Activated naive CD4-positive, alpha-beta T cell treated with anti-CD3 and anti-CD28 coated beads for 36 hours (primary cell): ENCODE measurements at regions of chr10 and their contacts with region 1.

Region 1: DNA sequence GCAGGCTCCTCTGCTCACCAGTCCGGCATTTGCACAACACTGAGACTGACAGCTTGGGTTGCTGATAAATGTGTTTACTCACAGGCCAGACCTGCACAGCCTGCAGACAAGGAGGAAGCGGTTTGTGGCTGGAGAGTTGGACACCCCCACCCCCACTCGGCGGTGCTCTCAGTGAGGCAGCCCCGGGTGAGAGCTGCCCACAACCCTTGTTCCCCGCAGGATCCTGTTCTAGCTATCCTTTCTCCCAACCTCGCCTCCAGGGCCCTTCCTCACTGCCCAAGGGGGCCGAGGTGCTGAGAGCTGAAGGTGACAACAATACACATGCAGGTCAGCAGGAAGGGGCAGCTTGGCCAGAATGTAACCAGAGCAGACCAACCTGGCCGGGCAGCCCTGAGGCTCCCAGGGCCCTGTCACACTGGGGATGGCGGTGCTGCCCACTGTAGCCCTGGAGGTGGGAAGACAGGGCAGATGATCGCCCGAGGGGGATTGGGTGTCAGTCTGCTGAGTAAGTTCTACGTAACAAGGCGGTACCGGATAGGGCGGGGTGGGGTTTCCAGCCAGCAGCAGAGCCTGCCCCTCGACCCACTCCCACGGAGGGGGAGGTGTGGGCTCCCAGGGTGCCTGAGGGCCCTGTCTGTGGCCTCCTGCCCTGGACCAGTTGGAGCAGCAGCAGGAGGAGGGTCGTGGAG is 2.1 kb upstream of the ADAM8 start:
- DNase-seq: no peak
- H3K4me3 Mint-ChIP-seq: no peak overlapping the region
- H3K27ac Mint-ChIP-seq: peak overlapping the region; percentile 19
- H3K4me1 Mint-ChIP-seq: peaks cover 23% of the 10 kb centered on the region
- H3K27me3 Mint-ChIP-seq: no peaks in the 10 kb centered on the region

Region 2: GRCh38 chr10:132929953-132930548 is 348.7 kb before region 1 on chr10:
- CTCF ChIA-PET with region 1: no interaction called
- intact Hi-C with region 1: loop called (anchors 5 kb)
- DNase-seq: peak; percentile 56
- H3K4me3 Mint-ChIP-seq: no peak overlapping the region
- H3K27ac Mint-ChIP-seq: peak overlapping the region; percentile 71
- H3K4me1 Mint-ChIP-seq: peaks cover 25% of the 10 kb centered on the region
- H3K27me3 Mint-ChIP-seq: no peaks in the 10 kb centered on the region

Region 3: DNA sequence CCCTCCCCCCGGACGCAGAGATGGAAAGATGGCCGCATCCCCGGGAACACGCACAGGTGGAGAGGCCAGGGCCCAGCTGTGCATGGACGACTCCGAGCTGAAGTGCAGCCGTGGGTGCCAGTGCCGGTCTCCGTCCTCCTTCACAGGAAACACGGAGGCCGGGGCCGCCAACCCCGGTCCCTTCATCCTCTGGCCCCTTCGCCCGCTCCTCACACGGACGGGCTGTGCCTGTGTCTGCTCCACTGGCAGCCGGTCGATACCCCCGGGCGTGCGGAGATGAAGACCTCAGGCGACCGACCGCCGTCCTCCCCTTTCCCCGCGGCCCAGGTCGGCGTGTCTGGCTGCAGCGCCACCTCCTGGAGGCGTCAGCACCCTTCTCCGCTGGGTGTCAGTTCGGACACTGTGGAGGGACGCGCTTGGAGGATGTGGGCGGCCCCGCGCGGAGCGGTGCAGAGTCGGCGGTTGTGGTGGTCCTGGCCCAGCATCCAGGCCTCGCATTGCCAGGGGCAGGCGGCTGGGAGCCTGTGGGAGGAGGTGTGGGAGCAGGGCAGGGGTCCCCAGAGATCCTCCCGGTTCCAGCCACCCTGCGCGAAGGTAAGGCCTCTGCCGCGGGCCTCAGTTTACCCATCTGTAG is 39.9 kb after region 1 on chr10:
- CTCF ChIA-PET with region 1: no interaction called
- intact Hi-C with region 1: no loop called
- DNase-seq: peak; percentile 74
- H3K4me3 Mint-ChIP-seq: peak overlapping the region; percentile 59
- H3K27ac Mint-ChIP-seq: no peak overlapping the region
- H3K4me1 Mint-ChIP-seq: peaks cover 7% of the 10 kb centered on the region
- H3K27me3 Mint-ChIP-seq: peaks cover 6% of the 10 kb centered on the region